Activated CD4-positive, alpha-beta T cell treated with anti-CD3 and anti-CD28 coated beads, Interleukin-2, amount 10 ng/mL, durations not matched to agents 24 days and 14 days (primary cell): ENCODE measurements at regions of chr12 and their contacts with region 1.

Region 1: GRCh38 chr12:2877047-2877952 is at the starts of genes FOXM1 and RHNO1:
- DNase-seq: peak; percentile 97
- H3K4me3 Mint-ChIP-seq: peak within 1 kb of the TSS; percentile 87
- H3K27ac Mint-ChIP-seq: peak within 1 kb of the TSS; percentile 98
- H3K4me1 Mint-ChIP-seq: peaks cover 44% of the 10 kb centered on the region
- H3K27me3 Mint-ChIP-seq: no peaks in the 10 kb centered on the region
- total RNA-seq, gene FOXM1: 73.7 and 74.0 TPM in 2 replicates
- total RNA-seq, gene RHNO1: 47.2 and 48.1 TPM in 2 replicates

Region 2: DNA sequence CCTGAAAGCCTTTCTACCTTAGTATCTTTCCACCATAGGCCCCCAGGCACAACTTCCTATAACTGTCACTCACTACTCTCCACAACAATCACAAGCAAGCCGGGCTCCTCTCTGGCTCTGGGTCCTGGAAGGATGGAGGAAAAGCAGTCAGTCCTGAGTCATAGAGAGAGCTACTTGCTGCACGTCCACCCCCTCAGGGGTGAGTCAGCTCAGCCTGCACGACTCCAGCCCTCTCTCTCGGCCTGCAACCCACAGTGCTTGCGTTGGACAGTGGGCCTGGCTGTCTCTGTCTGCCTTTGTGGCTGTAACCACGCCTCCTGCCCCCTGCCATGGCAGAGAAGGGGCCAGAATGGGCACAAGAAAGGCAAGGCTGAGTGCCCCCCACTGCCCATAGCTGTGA is 236.6 kb before region 1 on chr12:
- intact Hi-C with region 1: no loop called
- DNase-seq: no peak
- H3K4me3 Mint-ChIP-seq: no peak overlapping the region
- H3K27ac Mint-ChIP-seq: no peak overlapping the region
- H3K4me1 Mint-ChIP-seq: peaks cover 12% of the 10 kb centered on the region
- H3K27me3 Mint-ChIP-seq: peaks cover 21% of the 10 kb centered on the region

Region 3: DNA sequence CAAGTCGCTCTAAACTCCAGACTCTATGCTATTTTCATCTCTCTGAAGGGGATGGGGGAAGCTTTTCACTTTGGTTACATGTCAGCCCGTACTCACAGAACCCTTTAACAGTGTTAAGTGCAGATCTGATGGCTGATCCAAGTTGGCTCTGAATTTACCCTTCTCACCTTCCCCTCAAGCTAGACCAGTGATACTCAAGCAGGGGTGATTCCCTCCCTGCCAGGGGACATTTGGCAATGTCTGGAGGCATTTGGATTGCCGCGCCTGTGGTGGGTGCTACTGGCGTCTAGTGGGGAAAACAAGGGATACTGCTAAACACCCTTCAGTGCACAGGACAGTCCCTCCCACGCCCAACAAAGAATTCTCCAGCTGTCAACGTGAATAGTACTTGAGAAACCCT is 14.4 kb before region 1 on chr12:
- intact Hi-C with region 1: loop called (anchors 1 kb)
- DNase-seq: no peak
- H3K4me3 Mint-ChIP-seq: no peak overlapping the region
- H3K27ac Mint-ChIP-seq: no peak overlapping the region
- H3K4me1 Mint-ChIP-seq: peaks cover 4% of the 10 kb centered on the region
- H3K27me3 Mint-ChIP-seq: no peaks in the 10 kb centered on the region